AG04450 (cell line): ENCODE measurements at regions of chr3 and their contacts with region 1.

Region 1: DNA sequence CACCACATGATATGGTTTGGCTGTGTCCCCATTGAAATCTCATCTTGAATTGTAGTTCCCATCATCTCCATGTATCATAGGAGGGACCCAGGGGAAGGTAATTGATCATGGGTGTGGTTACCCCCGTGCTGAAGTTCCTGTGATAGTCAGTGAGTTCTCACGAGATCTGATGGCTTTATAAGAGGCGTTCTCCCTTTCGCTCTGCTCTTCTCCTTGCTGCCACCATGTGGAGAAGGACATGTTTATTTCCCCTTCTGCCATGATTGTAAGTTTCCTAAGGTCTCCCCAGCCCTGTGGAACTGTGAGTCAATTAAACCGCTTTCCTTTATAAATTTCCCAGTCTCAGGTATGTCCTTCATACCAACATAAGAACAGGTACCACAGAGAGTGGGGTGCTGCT is 21.9 kb downstream of the OSTN start:
- DNase-seq: no peak
- H3K4me3 ChIP-seq: no peak overlapping the region
- H3K27ac ChIP-seq: no peak overlapping the region
- H3K27me3 ChIP-seq: no peaks in the 10 kb centered on the region
- CTCF ChIP-seq: no peak

Region 2: GRCh38 chr3:191148131-191148530 is 72.8 kb before region 1 on chr3:
- CTCF ChIA-PET with region 1: interaction called, 10 read pairs
- POLR2A ChIA-PET with region 1: no interaction called
- DNase-seq: no peak
- H3K4me3 ChIP-seq: no peak overlapping the region
- H3K27ac ChIP-seq: no peak overlapping the region
- H3K27me3 ChIP-seq: no peaks in the 10 kb centered on the region
- CTCF ChIP-seq: no peak